G401 (cell line): ENCODE measurements at regions of chr3 and their contacts with region 1.

Region 1: GRCh38 chr3:120399372-120399771 is 50.2 kb upstream of the LRRC58 start:
- DNase-seq: no peak

Region 2: GRCh38 chr3:119969759-119970158 is 429.6 kb before region 1 on chr3:
- in situ Hi-C with region 1: no loop called
- DNase-seq: no peak

Region 3: GRCh38 chr3:120113128-120114116 is 285.9 kb before region 1 on chr3:
- in situ Hi-C with region 1: no loop called
- DNase-seq: no peak

Region 4: GRCh38 chr3:120274739-120275167 is 124.6 kb before region 1 on chr3:
- in situ Hi-C with region 1: loop called (anchors 25 kb)
- DNase-seq: no peak

Region 5: GRCh38 chr3:120341658-120342346 is 57.6 kb before region 1 on chr3:
- in situ Hi-C with region 1: no loop called
- DNase-seq: no peak

Region 6: GRCh38 chr3:120558771-120559241 is 159.4 kb after region 1 on chr3:
- in situ Hi-C with region 1: no loop called
- DNase-seq: peak; percentile 93